ENCODE measurements at regions of chr6 and their contacts with region 1.

Region 1: DNA sequence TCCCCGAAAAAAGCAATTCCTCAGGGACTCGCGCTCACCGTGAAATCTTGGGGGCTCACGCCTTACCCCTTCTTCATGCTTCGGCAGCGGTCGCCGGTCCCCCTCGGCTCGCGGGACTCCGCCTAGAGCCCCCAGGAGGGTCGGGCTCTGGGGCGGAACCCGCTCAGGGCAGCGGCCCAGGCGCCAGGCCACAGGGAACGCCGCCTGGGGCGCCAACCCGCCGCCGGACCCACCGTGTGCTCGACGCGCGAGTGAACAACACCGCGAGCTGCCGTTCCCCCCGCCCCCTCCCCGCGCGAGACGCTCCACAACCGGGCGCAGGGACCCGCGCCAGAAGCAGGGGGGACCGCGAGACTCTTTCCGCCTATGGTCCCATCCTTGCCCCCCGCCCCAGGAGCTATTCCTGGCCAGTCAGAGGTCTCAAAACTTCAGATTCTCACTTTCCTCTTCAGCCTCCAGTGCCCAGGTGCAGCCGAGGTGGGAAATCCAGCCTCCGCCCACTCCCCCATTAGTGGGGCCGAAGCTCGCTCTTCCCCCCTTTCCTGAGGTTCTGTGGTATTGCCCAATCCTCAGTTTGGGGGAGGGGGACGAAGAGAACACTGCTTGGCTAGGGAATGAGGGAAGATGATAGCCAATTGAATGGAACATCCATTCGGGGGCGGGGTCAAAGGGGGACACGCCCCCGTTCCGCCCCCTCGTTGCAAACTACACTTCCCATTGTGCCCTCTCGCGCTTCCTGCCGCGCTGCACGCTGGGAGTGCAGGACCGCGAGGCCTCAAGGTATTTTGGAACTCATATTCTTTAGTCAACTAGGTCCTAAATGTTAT is at the start of gene WASF1:
- DNase-seq: peak; percentile 97
- H3K4me3 ChIP-seq: peak within 1 kb of the TSS; percentile 65 to 83 (median 78)
- H3K27ac ChIP-seq: peak within 1 kb of the TSS; percentile 83 to 92 (median 89)
- H3K4me1 ChIP-seq: peaks cover 0 to 51% (median 35%) of the 10 kb centered on the region in 4 donors
- H3K27me3 ChIP-seq: no peaks in the 10 kb centered on the region
- CTCF ChIP-seq: no peak
- EP300 ChIP-seq: no peak
- POLR2A ChIP-seq: no peak
- total RNA-seq, gene WASF1: 10.2 to 34.9 (median 19.5) TPM

Region 2: GRCh38 chr6:110285306-110286060 is 105.9 kb after region 1 on chr6:
- intact Hi-C with region 1: no loop called
- DNase-seq: no peak
- H3K4me3 ChIP-seq: no peak overlapping the region
- H3K27ac ChIP-seq: no peak overlapping the region
- H3K4me1 ChIP-seq: peaks cover 0 to 15% (median 12%) of the 10 kb centered on the region in 4 donors
- H3K27me3 ChIP-seq: no peaks in the 10 kb centered on the region
- CTCF ChIP-seq: no peak
- EP300 ChIP-seq: no peak
- POLR2A ChIP-seq: no peak

Region 3: GRCh38 chr6:110366256-110366655 is 186.6 kb after region 1 on chr6:
- intact Hi-C with region 1: loop called (anchors 10 kb)
- DNase-seq: no peak
- H3K4me3 ChIP-seq: no peak overlapping the region
- H3K27ac ChIP-seq: no peak overlapping the region
- H3K4me1 ChIP-seq: peaks cover 0 to 25% (median 21%) of the 10 kb centered on the region in 4 donors
- H3K27me3 ChIP-seq: no peaks in the 10 kb centered on the region
- CTCF ChIP-seq: no peak
- EP300 ChIP-seq: no peak
- POLR2A ChIP-seq: no peak

Region 4: GRCh38 chr6:110389689-110390382 is 210.2 kb after region 1 on chr6:
- intact Hi-C with region 1: loop called (anchors 1 kb)
- DNase-seq: no peak
- H3K4me3 ChIP-seq: no peak overlapping the region
- H3K27ac ChIP-seq: peak overlapping the region in 3 of 4 donors; percentile 17 to 42 (median 23)
- H3K4me1 ChIP-seq: peaks cover 0 to 13% (median 11%) of the 10 kb centered on the region in 4 donors
- H3K27me3 ChIP-seq: no peaks in the 10 kb centered on the region
- CTCF ChIP-seq: no peak
- EP300 ChIP-seq: no peak
- POLR2A ChIP-seq: no peak